H1 (cell line): ENCODE measurements at regions of chr15 and their contacts with region 1.

Region 1: GRCh38 chr15:73972984-73973682 is 19.0 kb downstream of the STOML1 start:
- DNase-seq: peak; percentile 54 to 92
- H3K4me3 ChIP-seq: peak overlapping the region in 1 of 4 experiments; percentile 44; a peak in 1 of 8 replicates
- H3K27ac ChIP-seq: no peak overlapping the region
- H3K4me1 ChIP-seq: peaks cover 0 to 8% (median 2%) of the 10 kb centered on the region in 4 experiments; a peak in 4 of 7 replicates
- H3K27me3 ChIP-seq: peaks cover 0 to 4% (median 2%) of the 10 kb centered on the region in 4 experiments; a peak in 3 of 7 replicates
- CTCF ChIP-seq: peak; percentile 82 to 94 (median 91)
- EP300 ChIP-seq: no peak
- POLR2A ChIP-seq: no peak
- RAD21 ChIP-seq: peak; percentile 97 to 99

Region 2: GRCh38 chr15:73771380-73772045 is 201.6 kb before region 1 on chr15:
- CTCF ChIA-PET with region 1: no interaction called
- POLR2A ChIA-PET with region 1: no interaction called
- DNase-seq: no peak
- H3K4me3 ChIP-seq: no peak overlapping the region
- H3K27ac ChIP-seq: no peak overlapping the region
- H3K4me1 ChIP-seq: peaks cover 0 to 12% (median 3%) of the 10 kb centered on the region in 4 experiments; a peak in 3 of 7 replicates
- H3K27me3 ChIP-seq: no peaks in the 10 kb centered on the region
- CTCF ChIP-seq: peak; percentile 42 to 64 (median 52); a peak in 3 of 4 replicates
- EP300 ChIP-seq: no peak
- POLR2A ChIP-seq: no peak
- RAD21 ChIP-seq: peak; percentile 19 to 51; a peak in 2 of 4 replicates

Region 3: DNA sequence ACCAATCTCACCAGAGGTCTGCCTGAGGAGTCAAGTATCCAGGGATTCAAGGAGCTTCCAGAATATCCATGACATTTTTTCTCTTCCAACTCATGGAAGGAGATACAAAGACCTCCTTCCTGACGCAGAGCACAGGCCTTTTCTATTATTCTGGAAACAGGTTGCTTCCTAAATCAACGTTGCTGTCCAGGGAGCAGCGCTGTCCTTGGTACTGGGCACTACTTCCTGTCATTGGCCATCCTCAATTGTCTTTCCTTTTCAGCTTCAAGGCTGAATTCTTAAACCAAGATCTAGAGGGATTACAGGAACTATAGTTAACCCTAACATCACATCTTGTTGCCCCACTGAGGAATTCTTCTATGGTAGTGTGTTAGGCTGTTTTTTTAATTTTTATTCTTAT is 150.1 kb before region 1 on chr15:
- CTCF ChIA-PET with region 1: no interaction called
- POLR2A ChIA-PET with region 1: no interaction called
- DNase-seq: no peak
- H3K4me3 ChIP-seq: no peak overlapping the region
- H3K27ac ChIP-seq: no peak overlapping the region
- H3K4me1 ChIP-seq: no peaks in the 10 kb centered on the region; a peak in 1 of 7 replicates
- H3K27me3 ChIP-seq: no peaks in the 10 kb centered on the region; a peak in 1 of 7 replicates
- CTCF ChIP-seq: no peak
- EP300 ChIP-seq: no peak
- POLR2A ChIP-seq: no peak
- RAD21 ChIP-seq: no peak

Region 4: DNA sequence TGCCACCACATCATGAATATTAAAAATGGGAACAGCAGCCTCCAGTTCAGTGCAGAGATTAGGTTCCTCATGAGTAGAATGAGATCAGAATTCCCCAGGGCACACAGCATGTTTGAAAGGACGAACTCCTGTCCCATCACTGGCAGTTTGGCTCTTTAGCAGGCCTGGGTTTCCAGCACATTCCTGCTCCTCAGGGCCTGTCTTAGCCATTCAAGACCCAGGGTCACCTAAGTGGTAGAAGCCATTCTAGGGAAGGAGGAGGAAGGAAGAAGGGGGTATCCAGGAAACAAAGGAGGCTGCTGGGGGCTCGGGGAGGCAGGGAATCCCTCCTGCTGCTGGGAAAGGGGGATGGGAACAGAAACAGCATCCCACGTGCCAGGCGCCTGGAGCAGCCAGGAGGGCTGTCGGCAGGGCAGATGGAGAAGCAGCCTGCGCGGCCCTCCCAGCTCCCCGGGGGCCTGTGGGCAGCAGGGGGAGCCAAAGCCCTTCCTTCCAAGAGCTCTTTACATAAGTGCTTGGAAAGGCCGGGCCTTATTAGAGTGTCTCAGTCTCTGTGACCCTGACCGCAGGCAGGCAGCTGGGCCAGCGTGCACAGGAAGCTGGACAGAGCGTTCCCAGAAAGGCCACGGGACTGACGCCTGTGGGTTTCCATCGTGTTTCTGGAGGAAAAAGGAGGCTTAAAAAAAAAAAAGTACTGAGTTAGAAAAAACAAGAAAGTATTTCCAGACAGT is 22.1 kb before region 1 on chr15:
- CTCF ChIA-PET with region 1: interaction called, 23 read pairs
- POLR2A ChIA-PET with region 1: interaction called, 5 read pairs
- DNase-seq: peak; percentile 78 to 89
- H3K4me3 ChIP-seq: no peak overlapping the region; a peak in 1 of 8 replicates
- H3K27ac ChIP-seq: no peak overlapping the region
- H3K4me1 ChIP-seq: peaks cover 6 to 16% (median 12%) of the 10 kb centered on the region in 4 experiments
- H3K27me3 ChIP-seq: no peaks in the 10 kb centered on the region
- CTCF ChIP-seq: peak; percentile 68 to 92 (median 81)
- EP300 ChIP-seq: no peak
- POLR2A ChIP-seq: no peak
- RAD21 ChIP-seq: peak; percentile 81 to 87

Region 5: DNA sequence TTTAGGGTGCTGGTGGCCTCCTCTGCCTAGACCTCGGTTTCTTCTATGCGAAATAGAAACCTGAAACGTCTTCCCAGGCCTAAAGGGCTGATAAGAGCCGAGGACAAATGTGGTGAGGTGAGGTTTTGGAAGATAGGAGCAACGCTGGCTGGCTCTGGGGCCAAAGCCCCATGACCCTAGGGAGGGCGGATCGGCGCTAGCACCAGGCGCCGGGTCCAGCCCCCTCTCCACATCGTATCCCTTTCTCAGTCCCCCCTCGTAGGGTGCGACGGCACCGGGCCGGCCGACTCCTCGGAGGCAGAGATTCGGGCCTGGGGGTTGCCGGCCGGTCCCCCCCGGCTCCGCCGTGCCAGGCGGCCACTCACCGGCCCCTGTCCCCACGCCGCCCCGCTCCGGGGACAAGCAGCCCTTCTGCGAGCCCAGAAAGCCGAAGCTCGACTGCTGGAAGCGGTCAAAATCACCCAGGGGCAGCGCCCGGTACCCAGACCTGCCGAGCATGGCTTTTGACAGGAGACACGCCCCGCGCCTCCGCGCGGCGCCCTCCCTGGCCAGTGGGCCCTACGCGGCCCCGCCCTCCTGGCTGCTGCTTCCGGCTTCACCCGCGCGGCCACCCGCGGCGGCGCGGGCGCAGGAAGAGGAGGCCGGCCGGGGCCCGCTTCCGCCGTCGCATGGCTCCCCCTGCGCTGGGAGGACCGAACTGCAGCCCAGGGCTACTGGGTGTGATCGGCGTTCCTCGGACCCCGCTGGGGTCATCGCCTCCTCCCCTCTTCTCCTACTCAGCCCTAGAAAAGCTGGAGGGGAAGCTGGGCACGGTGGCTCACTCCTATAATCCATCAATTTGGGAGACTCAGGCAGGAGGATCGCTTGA is 18.8 kb after region 1 on chr15 and contains the start of gene STOML1:
- CTCF ChIA-PET with region 1: interaction called, 167 read pairs
- POLR2A ChIA-PET with region 1: interaction called, 3 read pairs
- DNase-seq: peak; percentile 71 to 100
- H3K4me3 ChIP-seq: peak within 1 kb of the TSS; percentile 33 to 90 (median 62)
- H3K27ac ChIP-seq: no peak within 1 kb of the TSS
- H3K4me1 ChIP-seq: peaks cover 0 to 7% (median under 1%) of the 10 kb centered on the region in 4 experiments; a peak in 3 of 7 replicates
- H3K27me3 ChIP-seq: peaks cover 0 to 8% (median 1%) of the 10 kb centered on the region in 4 experiments; a peak in 1 of 7 replicates
- CTCF ChIP-seq: peak; percentile 87 to 89 (median 89)
- EP300 ChIP-seq: no peak; a peak in 1 of 3 replicates
- POLR2A ChIP-seq: peak in 1 of 2 experiments; percentile 30; a peak in 1 of 3 replicates
- RAD21 ChIP-seq: 0 out of 4 replicates have a peak, but pooled peaks of 1 of the 2 experiments have one; percentile 15
- total RNA-seq, gene STOML1: 2.6 and 3.8 TPM in 2 replicates

Region 6: GRCh38 chr15:74025436-74025835 is 52.3 kb after region 1 on chr15:
- CTCF ChIA-PET with region 1: interaction called, 174 read pairs
- POLR2A ChIA-PET with region 1: no interaction called
- DNase-seq: no peak
- H3K4me3 ChIP-seq: no peak overlapping the region
- H3K27ac ChIP-seq: 0 out of 2 replicates have a peak overlapping the region, but pooled peaks have one; percentile 38
- H3K4me1 ChIP-seq: no peaks in the 10 kb centered on the region
- H3K27me3 ChIP-seq: no peaks in the 10 kb centered on the region
- CTCF ChIP-seq: no peak
- EP300 ChIP-seq: no peak
- POLR2A ChIP-seq: no peak
- RAD21 ChIP-seq: no peak

Region 7: DNA sequence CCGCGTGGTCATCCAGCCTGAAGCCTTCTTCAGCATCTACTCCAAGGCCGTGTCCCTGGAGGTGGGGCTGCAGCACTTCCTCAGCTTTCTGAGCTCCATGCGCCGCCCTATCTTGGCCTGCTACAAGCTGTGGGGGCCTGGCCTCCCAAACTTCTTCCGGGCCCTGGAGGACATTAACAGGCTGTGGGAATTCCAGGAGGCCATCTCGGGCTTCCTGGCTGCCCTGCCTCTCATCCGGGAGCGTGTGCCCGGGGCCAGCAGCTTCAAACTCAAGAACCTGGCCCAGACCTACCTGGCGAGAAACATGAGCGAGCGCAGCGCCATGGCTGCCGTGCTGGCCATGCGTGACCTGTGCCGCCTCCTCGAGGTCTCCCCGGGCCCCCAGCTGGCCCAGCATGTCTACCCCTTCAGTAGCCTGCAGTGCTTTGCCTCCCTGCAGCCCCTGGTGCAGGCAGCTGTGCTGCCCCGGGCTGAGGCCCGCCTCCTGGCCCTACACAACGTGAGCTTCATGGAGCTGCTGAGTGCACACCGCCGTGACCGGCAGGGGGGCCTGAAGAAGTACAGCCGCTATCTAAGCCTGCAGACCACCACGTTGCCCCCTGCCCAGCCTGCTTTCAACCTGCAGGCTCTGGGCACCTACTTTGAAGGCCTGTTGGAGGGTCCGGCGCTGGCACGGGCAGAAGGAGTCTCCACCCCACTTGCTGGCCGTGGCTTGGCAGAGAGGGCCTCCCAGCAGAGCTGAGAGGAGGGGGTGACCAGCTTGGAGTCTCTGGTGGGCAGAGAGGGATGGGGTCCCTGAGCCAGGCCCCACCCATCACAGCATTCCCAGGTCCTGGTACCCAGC is 71.4 kb after region 1 on chr15:
- CTCF ChIA-PET with region 1: interaction called, 174 read pairs
- POLR2A ChIA-PET with region 1: no interaction called
- DNase-seq: no peak
- H3K4me3 ChIP-seq: no peak overlapping the region
- H3K27ac ChIP-seq: no peak overlapping the region
- H3K4me1 ChIP-seq: peaks cover 0 to 5% (median 3%) of the 10 kb centered on the region in 4 experiments; a peak in 5 of 7 replicates
- H3K27me3 ChIP-seq: peaks cover 0 to under 1% (median 0%) of the 10 kb centered on the region in 4 experiments; a peak in 1 of 7 replicates
- CTCF ChIP-seq: no peak
- EP300 ChIP-seq: no peak
- POLR2A ChIP-seq: no peak
- RAD21 ChIP-seq: no peak